ENCODE measurements at regions of chr19 and their contacts with region 1.

Region 1: DNA sequence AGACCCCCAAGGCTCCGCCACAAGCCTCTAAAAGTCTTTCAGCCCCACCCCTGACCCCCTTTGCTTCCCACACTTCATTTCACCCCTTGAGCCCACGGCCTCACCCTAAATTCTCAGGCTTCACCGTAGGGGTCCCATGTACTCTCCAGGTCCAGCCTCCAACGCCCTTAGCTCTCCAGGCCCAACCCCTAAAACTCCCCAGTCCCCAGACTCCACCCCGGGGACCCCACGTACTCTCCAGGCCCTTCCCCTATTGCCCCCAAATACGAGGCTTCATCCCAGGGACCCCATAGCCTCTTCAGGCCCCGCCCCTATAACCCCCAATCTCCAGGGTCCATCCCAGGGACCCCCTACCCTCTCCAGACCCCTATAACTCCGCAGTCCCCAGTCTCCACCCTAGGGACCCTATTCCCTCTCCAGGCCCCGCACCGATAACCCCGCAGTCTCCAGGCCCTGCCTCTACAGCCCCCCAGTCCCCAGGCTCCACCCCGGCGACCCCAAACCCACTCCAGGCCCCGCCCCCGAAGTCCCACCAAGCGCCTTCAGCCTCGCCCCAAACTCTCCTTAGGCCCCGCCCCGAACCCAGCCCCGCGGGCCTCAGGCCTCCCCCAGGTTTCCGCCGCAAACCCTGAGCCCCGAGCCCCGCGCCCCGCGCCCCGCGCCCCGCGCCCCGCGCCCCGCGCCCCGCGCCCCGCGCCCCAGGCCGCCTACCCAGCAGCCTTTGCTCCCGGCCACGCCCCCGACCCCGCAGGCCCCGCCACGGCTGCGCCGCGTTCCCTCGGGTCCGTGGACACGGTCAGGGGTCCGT is 540 bp downstream of the MED16 start:
- DNase-seq: no peak
- H3K4me3 ChIP-seq: peak overlapping the region; percentile 75 to 99
- H3K27ac ChIP-seq: peak overlapping the region; percentile 82 to 87
- H3K4me1 ChIP-seq: peaks cover 4 to 6% of the 10 kb centered on the region in 2 donors
- H3K27me3 ChIP-seq: no peaks in the 10 kb centered on the region
- CTCF ChIP-seq: no peak

Region 2: GRCh38 chr19:869245-870177 is 22.9 kb before region 1 on chr19:
- intact Hi-C with region 1: loop called (anchors 2 kb)
- DNase-seq: peak; percentile 33 to 92
- H3K4me3 ChIP-seq: no peak overlapping the region
- H3K27ac ChIP-seq: peak overlapping the region; percentile 88 to 89
- H3K4me1 ChIP-seq: peaks cover 4 to 9% of the 10 kb centered on the region in 2 donors
- H3K27me3 ChIP-seq: no peaks in the 10 kb centered on the region
- CTCF ChIP-seq: no peak

Region 3: DNA sequence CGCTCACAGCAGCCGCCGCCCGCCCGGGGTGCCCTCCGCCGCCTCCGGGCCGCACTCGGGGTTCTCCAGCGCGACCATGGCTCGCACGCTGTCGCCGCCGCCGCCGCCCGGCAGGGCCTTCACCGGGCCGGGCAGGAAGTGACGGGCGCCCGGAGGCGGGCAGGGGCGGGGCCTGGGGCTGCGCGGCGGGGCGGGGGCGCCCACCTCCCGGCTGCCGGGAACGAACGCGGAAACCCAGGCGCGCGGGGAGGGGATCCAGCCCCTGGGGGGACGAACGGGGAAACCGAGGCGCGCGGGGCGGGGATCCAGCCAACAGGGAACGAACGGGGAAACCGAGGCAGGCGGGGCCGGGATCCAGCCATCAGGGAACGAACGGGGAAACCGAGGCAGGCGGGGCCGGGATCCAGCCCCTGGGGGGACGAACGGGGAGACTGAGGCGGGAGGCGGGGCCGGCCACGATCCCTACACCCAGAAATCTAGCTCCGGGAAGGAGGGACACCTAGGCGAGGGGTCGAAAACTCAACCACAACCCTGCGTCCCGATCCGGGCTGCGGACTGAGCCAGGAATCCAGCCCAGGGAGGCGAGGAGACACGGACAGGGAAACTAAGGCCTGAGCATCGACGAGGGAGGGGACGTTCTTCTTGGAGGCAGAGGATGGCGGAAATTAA is 20.8 kb after region 1 on chr19 and contains the start of gene R3HDM4:
- intact Hi-C with region 1: loop called (anchors 1 kb)
- DNase-seq: peak in 1 of 2 donors; percentile 86
- H3K4me3 ChIP-seq: peak within 1 kb of the TSS; percentile 93 to 95
- H3K27ac ChIP-seq: peak within 1 kb of the TSS; percentile 84 to 91
- H3K4me1 ChIP-seq: peaks cover 6 to 19% of the 10 kb centered on the region in 2 donors
- H3K27me3 ChIP-seq: peaks cover 15% of the 10 kb centered on the region
- CTCF ChIP-seq: no peak
- total RNA-seq, gene R3HDM4: 81.5 TPM